CD8-positive, alpha-beta T cell (primary cell): ENCODE measurements at regions of chr2 and their contacts with region 1.

Region 1: DNA sequence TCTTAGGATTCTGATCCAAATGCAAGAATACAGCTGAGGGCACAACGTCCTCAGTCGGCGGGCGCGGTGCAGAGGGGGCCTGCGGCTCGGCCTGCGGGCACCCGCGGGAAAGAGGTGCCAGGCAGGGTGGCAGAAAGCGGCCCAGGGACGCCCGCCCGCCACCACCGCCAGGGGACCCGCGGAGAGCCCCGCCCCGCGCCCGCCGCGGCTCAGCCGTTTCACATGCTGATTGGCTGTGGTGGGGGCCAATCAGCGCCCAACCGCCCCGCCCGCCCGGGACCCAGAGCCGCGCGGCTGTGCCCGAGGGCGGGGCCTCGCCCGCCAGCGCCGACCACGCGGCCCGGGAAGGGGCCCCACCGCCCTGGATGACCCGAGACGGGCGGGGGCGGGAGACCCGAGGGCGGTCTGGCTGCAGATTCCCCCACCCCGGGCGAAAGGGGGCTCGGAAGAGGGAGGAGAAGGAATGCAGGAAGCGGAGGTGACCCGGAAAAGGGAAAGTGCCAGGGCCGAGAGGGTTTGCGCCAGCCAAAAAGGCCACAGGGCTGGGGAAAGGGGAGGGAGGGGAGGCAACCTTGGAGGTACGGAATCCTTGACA is 8.0 kb downstream of the IRS1 start:
- DNase-seq: peak; percentile 84 to 94 (median 92)
- ATAC-seq: peak; percentile 96
- H3K4me3 ChIP-seq: peak overlapping the region; percentile 70 to 72
- H3K4me3 Mint-ChIP-seq: peak overlapping the region; percentile 94
- H3K27ac ChIP-seq: peak overlapping the region; percentile 86 to 90
- H3K27ac Mint-ChIP-seq: peak overlapping the region; percentile 98
- H3K4me1 ChIP-seq: peaks cover 18% of the 10 kb centered on the region
- H3K4me1 Mint-ChIP-seq: peaks cover 44% of the 10 kb centered on the region
- H3K27me3 ChIP-seq: no peaks in the 10 kb centered on the region
- H3K27me3 Mint-ChIP-seq: no peaks in the 10 kb centered on the region
- CTCF ChIP-seq: peak; percentile 65

Region 2: DNA sequence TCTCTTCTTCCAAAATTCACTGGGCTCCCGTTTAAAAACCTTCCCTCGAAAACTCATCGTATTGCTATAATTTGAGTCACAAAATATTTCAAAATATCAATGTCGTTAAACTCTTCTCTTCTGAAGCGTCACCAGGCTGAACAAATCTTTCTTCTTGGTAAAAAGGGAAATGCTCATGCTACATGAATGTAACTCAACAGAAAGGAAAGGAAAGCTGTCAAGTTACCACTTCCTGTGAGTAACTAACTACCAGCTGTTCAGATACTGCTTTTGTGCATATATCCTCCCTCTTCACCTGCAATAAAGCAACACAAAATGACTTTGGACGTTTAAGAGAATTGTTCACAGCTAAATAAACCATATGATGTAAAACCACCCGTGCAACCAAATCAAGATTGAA is 1844.7 kb before region 1 on chr2:
- CTCF ChIA-PET with region 1: no interaction called
- POLR2A ChIA-PET with region 1: no interaction called
- intact Hi-C with region 1: loop called in 1 of 2 experiments (anchors 10 kb)
- DNase-seq: peak in 2 of 9 experiments; percentile 64 to 84
- ATAC-seq: peak; percentile 78
- H3K4me3 ChIP-seq: peak overlapping the region; percentile 59 to 76
- H3K4me3 Mint-ChIP-seq: peak overlapping the region; percentile 89
- H3K27ac ChIP-seq: peak overlapping the region; percentile 72 to 81
- H3K27ac Mint-ChIP-seq: peak overlapping the region; percentile 97
- H3K4me1 ChIP-seq: peaks cover 73% of the 10 kb centered on the region
- H3K4me1 Mint-ChIP-seq: peaks cover 76% of the 10 kb centered on the region
- H3K27me3 ChIP-seq: no peaks in the 10 kb centered on the region
- H3K27me3 Mint-ChIP-seq: no peaks in the 10 kb centered on the region
- CTCF ChIP-seq: no peak

Region 3: DNA sequence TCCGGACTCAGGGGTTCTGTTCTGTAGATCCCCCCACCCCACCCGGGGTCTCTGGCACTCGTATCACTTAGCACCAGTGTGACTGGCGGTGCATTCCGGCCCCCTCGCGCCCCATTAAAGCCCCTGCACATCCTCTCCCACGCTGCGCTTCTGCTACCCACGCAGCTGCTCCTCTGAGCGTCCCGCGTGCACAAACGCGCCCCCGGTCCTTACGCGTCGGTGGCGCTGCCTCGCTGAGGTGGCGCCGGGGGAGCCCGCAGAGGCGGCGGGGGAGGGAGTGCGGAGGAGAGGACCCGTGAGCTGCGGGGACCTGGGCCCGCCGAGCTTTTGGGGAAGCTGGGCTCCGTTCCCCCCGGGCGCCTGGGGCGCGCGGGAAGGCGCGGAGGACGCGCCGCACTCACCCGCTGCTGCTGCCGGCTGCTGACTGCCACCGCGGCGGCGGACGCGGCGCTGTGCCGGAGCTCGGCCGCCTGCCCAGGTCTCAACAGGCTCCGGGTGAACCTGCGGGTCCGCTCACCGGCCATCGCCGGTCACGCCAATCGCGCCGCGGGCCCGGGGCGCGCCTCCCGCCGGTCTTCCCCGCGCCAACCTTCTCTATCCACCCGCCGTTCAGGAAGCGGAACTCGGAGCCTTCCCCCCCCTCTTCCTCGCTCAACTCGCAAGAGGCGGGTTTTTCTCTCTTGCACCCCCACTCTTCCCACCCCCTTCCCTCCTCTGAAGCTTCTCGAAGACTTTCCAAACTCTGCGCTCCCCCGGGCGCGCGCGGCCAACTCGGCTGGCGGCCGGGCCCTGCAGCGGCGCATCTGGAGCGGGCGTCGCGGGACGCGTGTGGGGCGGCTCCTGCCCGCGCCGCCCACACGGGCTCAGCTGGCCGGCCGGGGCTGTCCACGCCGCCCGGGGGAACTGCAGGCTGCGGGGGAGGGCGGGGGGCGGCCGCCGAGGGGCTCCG is 1749.5 kb before region 1 on chr2 and contains the start of gene DOCK10:
- CTCF ChIA-PET with region 1: no interaction called
- POLR2A ChIA-PET with region 1: no interaction called
- intact Hi-C with region 1: loop called in 1 of 2 experiments (anchors 10 kb)
- DNase-seq: peak; percentile 29 to 81 (median 57)
- ATAC-seq: peak; percentile 60
- H3K4me3 ChIP-seq: peak within 1 kb of the TSS; percentile 87 to 88
- H3K4me3 Mint-ChIP-seq: peak within 1 kb of the TSS; percentile 98
- H3K27ac ChIP-seq: peak within 1 kb of the TSS; percentile 73 to 77
- H3K27ac Mint-ChIP-seq: peak within 1 kb of the TSS; percentile 97
- H3K4me1 ChIP-seq: peaks cover 50% of the 10 kb centered on the region
- H3K4me1 Mint-ChIP-seq: peaks cover 55% of the 10 kb centered on the region
- H3K27me3 ChIP-seq: no peaks in the 10 kb centered on the region
- H3K27me3 Mint-ChIP-seq: no peaks in the 10 kb centered on the region
- CTCF ChIP-seq: no peak
- total RNA-seq, gene DOCK10: 183 to 188 TPM

Region 4: DNA sequence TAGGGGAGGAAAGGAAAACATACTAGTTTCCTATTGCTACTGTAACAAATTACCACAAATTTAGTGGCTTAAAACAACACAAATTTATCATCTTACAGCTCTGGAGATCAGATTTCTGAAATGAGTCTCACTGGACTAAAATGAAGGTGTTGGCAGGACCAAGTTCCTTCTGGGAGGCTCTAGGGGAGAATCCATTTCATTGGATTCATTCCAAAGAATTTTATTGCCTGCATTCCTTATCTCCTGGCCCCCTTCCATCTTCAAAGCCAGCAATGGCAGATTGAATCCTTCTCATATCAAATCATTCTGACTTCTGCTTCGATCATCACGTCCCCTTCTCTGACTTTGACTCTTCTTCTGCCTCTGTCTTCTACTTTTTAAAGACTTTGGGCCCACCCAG is 242.9 kb before region 1 on chr2:
- CTCF ChIA-PET with region 1: no interaction called
- POLR2A ChIA-PET with region 1: no interaction called
- intact Hi-C with region 1: no loop called
- DNase-seq: no peak
- ATAC-seq: no peak
- H3K4me3 ChIP-seq: no peak overlapping the region
- H3K4me3 Mint-ChIP-seq: no peak overlapping the region
- H3K27ac ChIP-seq: no peak overlapping the region
- H3K27ac Mint-ChIP-seq: no peak overlapping the region
- H3K4me1 ChIP-seq: no peaks in the 10 kb centered on the region
- H3K4me1 Mint-ChIP-seq: no peaks in the 10 kb centered on the region
- H3K27me3 ChIP-seq: no peaks in the 10 kb centered on the region
- H3K27me3 Mint-ChIP-seq: no peaks in the 10 kb centered on the region
- CTCF ChIP-seq: no peak

Region 5: GRCh38 chr2:226775032-226775509 is 16.5 kb before region 1 on chr2:
- CTCF ChIA-PET with region 1: interaction called, 3 read pairs
- POLR2A ChIA-PET with region 1: interaction called, 4 read pairs
- intact Hi-C with region 1: loop called in 1 of 2 experiments (anchors 1 kb)
- DNase-seq: no peak
- ATAC-seq: no peak
- H3K4me3 ChIP-seq: no peak overlapping the region
- H3K4me3 Mint-ChIP-seq: no peak overlapping the region
- H3K27ac ChIP-seq: no peak overlapping the region
- H3K27ac Mint-ChIP-seq: no peak overlapping the region
- H3K4me1 ChIP-seq: peaks cover 15% of the 10 kb centered on the region
- H3K4me1 Mint-ChIP-seq: peaks cover 25% of the 10 kb centered on the region
- H3K27me3 ChIP-seq: no peaks in the 10 kb centered on the region
- H3K27me3 Mint-ChIP-seq: no peaks in the 10 kb centered on the region
- CTCF ChIP-seq: no peak

Region 6: DNA sequence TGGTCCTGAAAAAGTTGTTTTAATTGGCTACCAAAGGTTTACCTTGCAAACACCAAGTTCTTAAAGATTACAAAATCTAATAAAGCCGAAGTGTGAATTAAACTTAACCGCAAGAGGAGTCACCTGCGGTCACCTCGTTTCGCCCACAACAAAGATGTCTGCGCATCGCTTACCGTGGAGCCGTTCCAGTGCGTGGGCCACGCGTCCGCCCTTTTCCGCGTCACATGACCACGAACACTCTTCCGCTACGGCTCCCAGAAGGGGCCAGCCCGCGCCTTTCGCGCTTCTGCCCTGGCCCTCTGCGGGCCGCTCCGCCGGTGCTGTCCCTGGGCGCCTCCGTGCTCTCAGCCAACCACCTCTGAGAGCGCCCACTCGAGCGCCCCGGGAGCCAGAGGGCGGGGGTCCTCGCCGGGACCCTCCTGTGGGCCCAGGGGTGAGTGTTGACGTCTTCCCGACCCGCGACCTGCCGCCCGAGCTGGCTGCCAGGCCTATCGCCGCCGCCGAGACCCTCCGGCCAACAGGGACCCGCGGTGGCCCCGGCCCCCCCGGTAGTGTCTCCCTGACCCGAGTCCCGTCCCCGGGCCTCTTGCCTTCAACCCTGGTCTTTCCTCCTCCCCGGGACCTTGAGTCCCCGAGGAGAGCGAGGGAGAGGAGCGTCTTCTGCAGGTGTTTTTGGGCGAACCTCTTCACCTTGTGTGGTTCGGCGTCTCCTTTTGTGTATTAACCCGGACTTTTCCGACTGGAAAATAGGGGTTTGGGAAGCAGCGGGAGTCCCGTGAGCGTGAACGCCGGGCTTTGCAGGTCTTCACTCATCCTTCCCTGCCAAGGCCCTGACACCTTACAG is 533.6 kb after region 1 on chr2 and contains the start of gene MFF:
- CTCF ChIA-PET with region 1: no interaction called
- POLR2A ChIA-PET with region 1: no interaction called
- intact Hi-C with region 1: loop called in 1 of 2 experiments (anchors 2 kb)
- DNase-seq: peak; percentile 86 to 98 (median 93)
- ATAC-seq: peak; percentile 96
- H3K4me3 ChIP-seq: peak within 1 kb of the TSS; percentile 75 to 81
- H3K4me3 Mint-ChIP-seq: peak within 1 kb of the TSS; percentile 95
- H3K27ac ChIP-seq: peak within 1 kb of the TSS; percentile 59 to 80
- H3K27ac Mint-ChIP-seq: peak within 1 kb of the TSS; percentile 91
- H3K4me1 ChIP-seq: peaks cover 25% of the 10 kb centered on the region
- H3K4me1 Mint-ChIP-seq: peaks cover 56% of the 10 kb centered on the region
- H3K27me3 ChIP-seq: no peaks in the 10 kb centered on the region
- H3K27me3 Mint-ChIP-seq: no peaks in the 10 kb centered on the region
- CTCF ChIP-seq: no peak
- total RNA-seq, gene MFF: 48.6 to 50.3 TPM

Region 7: DNA sequence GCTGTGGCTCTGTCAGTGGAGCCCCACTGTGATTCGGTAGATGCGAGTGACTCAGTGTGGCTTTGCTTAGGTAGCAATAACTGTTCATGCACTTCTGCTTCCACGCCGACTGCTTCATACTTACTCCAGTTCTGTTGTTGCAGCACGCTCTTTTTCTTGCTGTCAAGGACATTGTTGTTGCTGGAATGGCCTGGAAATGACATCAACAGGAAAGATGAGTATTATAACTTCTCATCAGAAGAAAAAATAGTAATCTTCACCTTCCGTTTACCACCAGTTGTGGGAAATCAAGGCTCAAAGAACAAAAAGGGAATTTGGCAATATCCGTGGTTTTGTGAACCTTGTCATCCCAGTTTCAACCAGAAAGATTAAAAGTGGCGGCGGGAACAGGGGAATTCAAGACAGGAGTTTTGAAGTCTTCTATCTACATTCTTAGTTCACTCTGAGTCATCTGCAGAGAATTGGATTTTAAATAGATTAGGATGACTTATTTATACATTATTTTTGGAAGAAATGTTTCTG is 579.3 kb after region 1 on chr2:
- CTCF ChIA-PET with region 1: no interaction called
- POLR2A ChIA-PET with region 1: no interaction called
- intact Hi-C with region 1: no loop called
- DNase-seq: peak in 1 of 9 experiments; percentile 34
- ATAC-seq: no peak
- H3K4me3 ChIP-seq: no peak overlapping the region
- H3K4me3 Mint-ChIP-seq: no peak overlapping the region
- H3K27ac ChIP-seq: no peak overlapping the region
- H3K27ac Mint-ChIP-seq: no peak overlapping the region
- H3K4me1 ChIP-seq: no peaks in the 10 kb centered on the region
- H3K4me1 Mint-ChIP-seq: peaks cover 6% of the 10 kb centered on the region
- H3K27me3 ChIP-seq: peaks cover 0 to 4% of the 10 kb centered on the region in 2 experiments
- H3K27me3 Mint-ChIP-seq: peaks cover 5% of the 10 kb centered on the region
- CTCF ChIP-seq: no peak